Panc1 (cell line): ENCODE measurements at regions of chr19 and their contacts with region 1.

Region 1: GRCh38 chr19:17458970-17459369 is 1.8 kb downstream of the NXNL1 start:
- DNase-seq: no peak
- ATAC-seq: no peak
- H3K4me3 ChIP-seq: no peak overlapping the region
- H3K27ac ChIP-seq: no peak overlapping the region
- H3K4me1 ChIP-seq: no peaks in the 10 kb centered on the region
- H3K27me3 ChIP-seq: no peaks in the 10 kb centered on the region
- CTCF ChIP-seq: no peak

Region 2: GRCh38 chr19:17530586-17530985 is 71.6 kb after region 1 on chr19:
- CTCF ChIA-PET with region 1: no interaction called
- POLR2A ChIA-PET with region 1: interaction called, 17 read pairs
- in situ Hi-C with region 1: no loop called
- intact Hi-C with region 1: no loop called
- DNase-seq: no peak
- ATAC-seq: peak; percentile 80
- H3K4me3 ChIP-seq: no peak overlapping the region
- H3K27ac ChIP-seq: peak overlapping the region; percentile 65; the same call in 1 of the 2 replicates
- H3K4me1 ChIP-seq: no peaks in the 10 kb centered on the region; the same call in 1 of the 2 replicates
- H3K27me3 ChIP-seq: no peaks in the 10 kb centered on the region
- CTCF ChIP-seq: no peak

Region 3: DNA sequence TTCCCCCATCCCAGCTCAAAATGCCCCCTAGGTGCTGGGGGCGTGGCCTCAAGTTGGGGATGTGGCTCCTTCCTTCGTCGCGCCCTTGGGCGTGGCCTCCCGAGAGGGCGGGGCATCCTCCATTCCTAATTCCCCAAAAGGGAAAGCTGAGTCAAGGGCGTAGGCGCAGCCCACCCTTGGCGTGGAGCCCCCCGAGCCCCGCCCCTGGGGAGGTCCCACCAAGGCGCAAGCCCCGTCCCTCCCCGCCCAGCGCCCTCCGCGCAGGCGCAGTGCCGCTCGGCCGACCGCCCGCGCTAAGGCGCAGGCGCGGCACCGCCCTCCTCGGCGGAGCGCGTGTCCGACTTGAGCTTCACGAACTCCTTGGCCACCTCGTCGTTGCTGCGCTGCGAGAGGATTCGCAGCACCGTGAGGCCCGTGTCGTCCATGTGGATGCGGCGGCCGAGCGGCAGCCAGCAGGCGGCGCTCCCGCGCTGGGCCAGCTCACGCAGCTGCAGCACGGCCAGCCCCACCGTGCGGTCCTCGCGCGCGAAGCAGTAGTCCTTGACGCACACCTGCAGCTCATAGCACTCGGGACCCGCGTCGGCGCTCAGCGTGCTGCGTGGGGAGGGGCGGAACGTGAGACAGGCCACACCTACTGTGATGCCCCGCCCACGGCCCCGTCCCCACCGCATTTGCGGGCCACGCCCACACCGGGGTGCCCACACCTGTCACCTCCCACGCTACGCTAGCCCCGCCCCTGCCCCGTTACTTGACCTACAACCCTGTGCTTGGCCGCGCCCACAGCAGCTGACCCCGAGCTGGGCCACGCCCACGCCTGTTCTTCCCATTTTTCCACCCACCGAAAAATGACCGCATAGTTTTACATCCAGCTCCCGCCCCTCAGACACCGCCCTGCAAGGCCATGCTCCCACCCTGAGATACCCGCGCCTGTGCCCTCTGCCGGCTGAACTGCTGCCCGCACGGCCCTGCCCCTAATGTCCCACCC is 147.1 kb after region 1 on chr19:
- CTCF ChIA-PET with region 1: no interaction called
- POLR2A ChIA-PET with region 1: no interaction called
- in situ Hi-C with region 1: no loop called
- intact Hi-C with region 1: no loop called
- DNase-seq: peak; percentile 69
- ATAC-seq: peak; percentile 92
- H3K4me3 ChIP-seq: peak overlapping the region; percentile 46 to 57
- H3K27ac ChIP-seq: peak overlapping the region; percentile 71
- H3K4me1 ChIP-seq: no peaks in the 10 kb centered on the region
- H3K27me3 ChIP-seq: no peaks in the 10 kb centered on the region
- CTCF ChIP-seq: peak; percentile 67; the same call in 1 of the 2 replicates